CD4-positive, alpha-beta memory T cell (primary cell): ENCODE measurements at regions of chr5 and their contacts with region 1.

Region 1: GRCh38 chr5:157253547-157253946 is 12.4 kb upstream of the CYFIP2 start:
- DNase-seq: no peak
- H3K4me3 ChIP-seq: no peak overlapping the region
- H3K4me3 Mint-ChIP-seq: peak overlapping the region in 7 of 8 donors; percentile 61 to 86 (median 79)
- H3K27ac ChIP-seq: peak overlapping the region; percentile 64
- H3K27ac Mint-ChIP-seq: peak overlapping the region; percentile 84 to 98 (median 94)
- H3K4me1 ChIP-seq: peaks cover 97% of the 10 kb centered on the region
- H3K4me1 Mint-ChIP-seq: peaks cover 78 to 96% (median 88%) of the 10 kb centered on the region in 4 donors
- H3K27me3 ChIP-seq: no peaks in the 10 kb centered on the region
- H3K27me3 Mint-ChIP-seq: no peaks in the 10 kb centered on the region

Region 2: GRCh38 chr5:157180374-157181264 is 72.9 kb before region 1 on chr5 and contains the start of gene ITK:
- CTCF ChIA-PET with region 1: interaction called, 14 read pairs
- POLR2A ChIA-PET with region 1: interaction called, 123 read pairs
- intact Hi-C with region 1: loop called (anchors 2 kb)
- DNase-seq: peak; percentile 77 to 85 (median 81)
- H3K4me3 ChIP-seq: peak within 1 kb of the TSS; percentile 83 to 99
- H3K4me3 Mint-ChIP-seq: peak within 1 kb of the TSS; percentile 97 to 100 (median 99)
- H3K27ac ChIP-seq: peak within 1 kb of the TSS; percentile 77
- H3K27ac Mint-ChIP-seq: peak within 1 kb of the TSS; percentile 84 to 99 (median 97)
- H3K4me1 ChIP-seq: peaks cover 47% of the 10 kb centered on the region
- H3K4me1 Mint-ChIP-seq: peaks cover 28 to 67% (median 43%) of the 10 kb centered on the region in 4 donors
- H3K27me3 ChIP-seq: no peaks in the 10 kb centered on the region
- H3K27me3 Mint-ChIP-seq: no peaks in the 10 kb centered on the region
- total RNA-seq, gene ITK: 398 to 421 TPM

Region 3: DNA sequence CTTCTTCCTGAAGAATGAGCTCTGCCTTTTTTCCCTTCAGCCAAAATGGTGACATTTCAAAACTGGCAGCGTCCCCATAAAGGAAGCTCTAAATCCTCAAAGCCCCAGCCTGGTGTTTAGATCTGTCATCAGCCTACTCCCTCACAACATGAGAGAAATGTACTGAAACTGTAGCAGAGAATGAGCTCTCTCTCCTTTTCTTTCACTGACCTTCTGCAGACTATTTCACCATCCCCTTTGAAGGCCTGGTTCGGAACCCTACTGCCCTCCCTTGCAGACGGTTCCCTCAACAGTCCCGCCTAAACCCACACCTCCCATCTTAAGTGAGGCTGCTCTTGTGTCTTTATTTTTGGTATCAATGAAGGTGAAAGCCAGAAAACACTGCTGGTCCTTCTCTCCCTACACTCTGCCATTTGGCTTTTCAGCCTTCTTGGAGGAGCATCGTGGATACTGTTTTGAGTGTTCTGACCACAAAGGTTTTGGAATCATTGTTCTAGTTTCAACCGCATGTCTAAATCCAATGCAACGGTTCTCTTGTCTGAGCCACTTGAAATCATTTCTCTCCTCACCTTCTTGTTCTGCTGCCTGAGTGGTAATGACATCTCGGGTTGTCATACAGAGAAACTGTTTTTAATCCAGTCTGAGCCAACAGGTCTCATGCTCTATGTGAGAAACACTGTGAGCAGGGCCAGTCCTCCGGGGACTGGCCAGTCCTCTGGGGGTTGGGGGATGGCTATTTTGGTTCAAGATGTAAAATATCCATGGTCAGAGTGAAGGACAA is 33.9 kb before region 1 on chr5:
- CTCF ChIA-PET with region 1: interaction called, 12 read pairs
- POLR2A ChIA-PET with region 1: interaction called, 23 read pairs
- intact Hi-C with region 1: loop called (anchors 5 kb)
- DNase-seq: no peak
- H3K4me3 ChIP-seq: no peak overlapping the region
- H3K4me3 Mint-ChIP-seq: peak overlapping the region in 7 of 8 donors; percentile 57 to 76 (median 67)
- H3K27ac ChIP-seq: peak overlapping the region; percentile 44
- H3K27ac Mint-ChIP-seq: peak overlapping the region; percentile 87 to 96 (median 93)
- H3K4me1 ChIP-seq: peaks cover 98% of the 10 kb centered on the region
- H3K4me1 Mint-ChIP-seq: peaks cover 71 to 85% (median 81%) of the 10 kb centered on the region in 4 donors
- H3K27me3 ChIP-seq: no peaks in the 10 kb centered on the region
- H3K27me3 Mint-ChIP-seq: no peaks in the 10 kb centered on the region

Region 4: GRCh38 chr5:157265714-157266285 is 12.3 kb after region 1 on chr5 and contains the start of gene CYFIP2:
- CTCF ChIA-PET with region 1: interaction called, 36 read pairs
- POLR2A ChIA-PET with region 1: interaction called, 193 read pairs
- intact Hi-C with region 1: loop called (anchors 1 kb)
- DNase-seq: peak; percentile 84 to 88 (median 85)
- H3K4me3 ChIP-seq: peak within 1 kb of the TSS; percentile 62 to 75
- H3K4me3 Mint-ChIP-seq: peak within 1 kb of the TSS; percentile 95 to 100 (median 97)
- H3K27ac ChIP-seq: peak within 1 kb of the TSS; percentile 78
- H3K27ac Mint-ChIP-seq: peak within 1 kb of the TSS; percentile 97 to 99 (median 98)
- H3K4me1 ChIP-seq: peaks cover 65% of the 10 kb centered on the region
- H3K4me1 Mint-ChIP-seq: peaks cover 48 to 82% (median 66%) of the 10 kb centered on the region in 4 donors
- H3K27me3 ChIP-seq: no peaks in the 10 kb centered on the region
- H3K27me3 Mint-ChIP-seq: no peaks in the 10 kb centered on the region
- total RNA-seq, gene CYFIP2: 317 to 325 TPM

Region 5: DNA sequence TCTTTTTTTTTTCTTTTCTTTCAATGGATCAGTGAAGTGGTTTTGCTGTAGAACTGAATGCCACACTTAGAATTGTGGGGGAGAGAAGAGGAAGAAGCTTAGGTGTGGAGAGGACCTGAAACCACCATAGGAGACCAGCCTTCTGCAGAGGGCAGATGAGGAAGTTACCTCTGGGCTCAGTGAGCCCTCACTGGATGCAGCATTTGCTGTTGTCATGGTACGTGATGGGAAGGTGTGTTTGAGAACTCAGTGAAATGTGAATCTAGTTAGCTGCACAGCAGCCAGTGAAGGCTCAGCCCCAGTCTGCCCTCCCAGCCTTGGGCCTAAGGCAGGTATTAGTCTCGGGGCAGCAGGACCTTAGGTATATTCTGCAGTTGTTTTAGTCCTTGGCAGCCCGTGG is 29.9 kb after region 1 on chr5:
- CTCF ChIA-PET with region 1: interaction called, 10 read pairs
- POLR2A ChIA-PET with region 1: interaction called, 191 read pairs
- intact Hi-C with region 1: loop called (anchors 5 kb)
- DNase-seq: peak in 1 of 5 donors; percentile 32
- H3K4me3 ChIP-seq: no peak overlapping the region
- H3K4me3 Mint-ChIP-seq: peak overlapping the region in 7 of 8 donors; percentile 1 to 55 (median 46)
- H3K27ac ChIP-seq: no peak overlapping the region
- H3K27ac Mint-ChIP-seq: peak overlapping the region; percentile 33 to 91 (median 78)
- H3K4me1 ChIP-seq: peaks cover 88% of the 10 kb centered on the region
- H3K4me1 Mint-ChIP-seq: peaks cover 61 to 85% (median 68%) of the 10 kb centered on the region in 4 donors
- H3K27me3 ChIP-seq: no peaks in the 10 kb centered on the region
- H3K27me3 Mint-ChIP-seq: no peaks in the 10 kb centered on the region

Region 6: DNA sequence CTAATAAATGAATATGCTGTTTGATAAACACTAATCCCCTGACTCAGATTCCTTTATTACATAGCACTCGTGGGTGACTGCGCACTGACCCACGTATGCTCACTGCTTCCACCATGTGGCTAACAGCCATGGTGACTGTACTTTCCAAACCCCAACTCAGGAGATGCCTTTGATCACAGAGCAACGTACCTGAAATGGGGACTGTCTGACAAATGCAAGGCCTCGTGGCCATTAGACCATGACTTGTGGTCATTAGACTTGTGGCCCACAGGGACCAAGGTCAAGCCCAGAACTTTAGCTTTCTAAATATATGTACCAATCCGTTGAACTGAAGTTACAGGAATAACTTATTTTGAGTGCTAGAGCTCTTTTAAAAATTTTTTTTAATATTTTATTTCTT is 58.9 kb after region 1 on chr5:
- CTCF ChIA-PET with region 1: interaction called, 237 read pairs
- POLR2A ChIA-PET with region 1: interaction called, 29 read pairs
- intact Hi-C with region 1: loop called (anchors 1 kb)
- DNase-seq: peak; percentile 55 to 71 (median 61)
- H3K4me3 ChIP-seq: no peak overlapping the region
- H3K4me3 Mint-ChIP-seq: peak overlapping the region in 1 of 8 donors; percentile 2
- H3K27ac ChIP-seq: no peak overlapping the region
- H3K27ac Mint-ChIP-seq: peak overlapping the region; percentile 24 to 94 (median 77)
- H3K4me1 ChIP-seq: peaks cover 33% of the 10 kb centered on the region
- H3K4me1 Mint-ChIP-seq: peaks cover 23 to 42% (median 34%) of the 10 kb centered on the region in 4 donors
- H3K27me3 ChIP-seq: no peaks in the 10 kb centered on the region
- H3K27me3 Mint-ChIP-seq: no peaks in the 10 kb centered on the region

Region 7: DNA sequence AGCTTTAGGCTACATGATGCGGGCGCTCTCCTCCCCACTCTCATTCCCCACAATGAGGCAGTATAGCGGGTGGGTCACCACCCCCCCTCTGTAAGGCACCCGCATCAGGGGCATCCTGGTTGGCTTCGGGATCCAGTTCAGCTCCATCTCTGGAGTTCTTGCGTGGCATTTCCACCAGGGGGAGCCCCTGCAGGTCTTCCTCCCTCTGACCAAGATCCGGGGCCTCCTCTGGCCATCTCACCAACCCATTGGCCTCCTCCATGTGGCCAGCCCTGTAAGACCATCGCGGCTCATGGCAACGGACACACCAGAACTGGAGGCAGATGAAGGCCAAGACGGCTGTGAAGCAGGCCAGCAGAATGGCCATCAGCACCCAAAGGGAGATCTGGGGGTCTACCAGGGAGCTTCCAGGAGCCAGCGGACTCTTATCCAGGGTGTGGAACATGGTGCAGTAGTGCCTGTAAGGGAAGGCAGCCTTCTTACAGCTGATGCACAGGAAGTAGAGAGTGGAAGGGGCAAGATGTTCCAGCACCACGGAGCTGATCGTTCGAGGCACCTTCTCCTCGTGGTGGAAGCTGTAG is 89.4 kb after region 1 on chr5:
- CTCF ChIA-PET with region 1: interaction called, 13 read pairs
- POLR2A ChIA-PET with region 1: no interaction called
- intact Hi-C with region 1: no loop called
- DNase-seq: peak in 2 of 5 donors; percentile 15 to 21
- H3K4me3 ChIP-seq: no peak overlapping the region
- H3K4me3 Mint-ChIP-seq: peak overlapping the region in 1 of 8 donors; percentile 8
- H3K27ac ChIP-seq: no peak overlapping the region
- H3K27ac Mint-ChIP-seq: peak overlapping the region in 5 of 7 donors; percentile 18 to 89 (median 41)
- H3K4me1 ChIP-seq: peaks cover 15% of the 10 kb centered on the region
- H3K4me1 Mint-ChIP-seq: peaks cover 19 to 29% (median 24%) of the 10 kb centered on the region in 4 donors
- H3K27me3 ChIP-seq: no peaks in the 10 kb centered on the region
- H3K27me3 Mint-ChIP-seq: no peaks in the 10 kb centered on the region

Region 8: GRCh38 chr5:158174918-158175851 is 921.6 kb after region 1 on chr5:
- CTCF ChIA-PET with region 1: no interaction called
- POLR2A ChIA-PET with region 1: no interaction called
- intact Hi-C with region 1: no loop called
- DNase-seq: peak in 4 of 5 donors; percentile 13 to 22 (median 18)
- H3K4me3 ChIP-seq: no peak overlapping the region
- H3K4me3 Mint-ChIP-seq: no peak overlapping the region
- H3K27ac ChIP-seq: no peak overlapping the region
- H3K27ac Mint-ChIP-seq: no peak overlapping the region
- H3K4me1 ChIP-seq: no peaks in the 10 kb centered on the region
- H3K4me1 Mint-ChIP-seq: no peaks in the 10 kb centered on the region
- H3K27me3 ChIP-seq: no peaks in the 10 kb centered on the region
- H3K27me3 Mint-ChIP-seq: peaks cover 7 to 12% of the 10 kb centered on the region in 2 donors